B cell (primary cell): ENCODE measurements at regions of chr14 and their contacts with region 1.

Region 1: GRCh38 chr14:58297762-58298476 is 436 bp upstream of the ARID4A start:
- DNase-seq: peak; percentile 99
- ATAC-seq: peak; percentile 80
- H3K4me3 ChIP-seq: peak overlapping the region; percentile 85 to 98 (median 91)
- H3K4me3 Mint-ChIP-seq: no peak overlapping the region
- H3K27ac ChIP-seq: peak overlapping the region; percentile 96 to 98
- H3K27ac Mint-ChIP-seq: no peak overlapping the region
- H3K4me1 ChIP-seq: peaks cover 21 to 33% of the 10 kb centered on the region in 2 donors
- H3K4me1 Mint-ChIP-seq: peaks cover 43% of the 10 kb centered on the region
- H3K27me3 ChIP-seq: no peaks in the 10 kb centered on the region
- H3K27me3 Mint-ChIP-seq: no peaks in the 10 kb centered on the region
- CTCF ChIP-seq: no peak

Region 2: GRCh38 chr14:58199726-58200479 is 98.0 kb before region 1 on chr14 and contains the start of gene ACTR10:
- CTCF ChIA-PET with region 1: no interaction called
- POLR2A ChIA-PET with region 1: interaction called, 7 read pairs
- intact Hi-C with region 1: loop called (anchors 1 kb)
- DNase-seq: peak; percentile 95
- ATAC-seq: peak; percentile 89
- H3K4me3 ChIP-seq: peak within 1 kb of the TSS; percentile 71 to 88 (median 79)
- H3K4me3 Mint-ChIP-seq: peak within 1 kb of the TSS; percentile 95
- H3K27ac ChIP-seq: peak within 1 kb of the TSS; percentile 70 to 96
- H3K27ac Mint-ChIP-seq: peak within 1 kb of the TSS; percentile 96
- H3K4me1 ChIP-seq: peaks cover 15 to 17% of the 10 kb centered on the region in 2 donors
- H3K4me1 Mint-ChIP-seq: peaks cover 28% of the 10 kb centered on the region
- H3K27me3 ChIP-seq: peaks cover 0 to 3% (median 1%) of the 10 kb centered on the region in 4 experiments
- H3K27me3 Mint-ChIP-seq: no peaks in the 10 kb centered on the region
- CTCF ChIP-seq: no peak
- total RNA-seq, gene ACTR10: 34.1 and 40.6 TPM in 2 replicates

Region 3: GRCh38 chr14:58244556-58245387 is 53.1 kb before region 1 on chr14 and contains the start of gene PSMA3:
- CTCF ChIA-PET with region 1: interaction called, 5 read pairs
- POLR2A ChIA-PET with region 1: interaction called, 17 read pairs
- intact Hi-C with region 1: loop called (anchors 1 kb)
- DNase-seq: peak; percentile 97
- ATAC-seq: peak; percentile 87
- H3K4me3 ChIP-seq: peak within 1 kb of the TSS; percentile 89 to 100 (median 97)
- H3K4me3 Mint-ChIP-seq: peak within 1 kb of the TSS; percentile 96
- H3K27ac ChIP-seq: peak within 1 kb of the TSS; percentile 90 to 92
- H3K27ac Mint-ChIP-seq: peak within 1 kb of the TSS; percentile 96
- H3K4me1 ChIP-seq: peaks cover 9 to 19% of the 10 kb centered on the region in 2 donors
- H3K4me1 Mint-ChIP-seq: peaks cover 44% of the 10 kb centered on the region
- H3K27me3 ChIP-seq: no peaks in the 10 kb centered on the region
- H3K27me3 Mint-ChIP-seq: no peaks in the 10 kb centered on the region
- CTCF ChIP-seq: no peak
- total RNA-seq, gene PSMA3: 98.1 and 99.2 TPM in 2 replicates

Region 4: GRCh38 chr14:58280954-58281787 is 16.7 kb before region 1 on chr14:
- CTCF ChIA-PET with region 1: no interaction called
- POLR2A ChIA-PET with region 1: interaction called, 5 read pairs
- intact Hi-C with region 1: loop called (anchors 1 kb)
- DNase-seq: peak; percentile 76
- ATAC-seq: peak; percentile 84
- H3K4me3 ChIP-seq: peak overlapping the region in 2 of 5 experiments; percentile 2 to 9
- H3K4me3 Mint-ChIP-seq: peak overlapping the region; percentile 61
- H3K27ac ChIP-seq: peak overlapping the region; percentile 64 to 91
- H3K27ac Mint-ChIP-seq: peak overlapping the region; percentile 88
- H3K4me1 ChIP-seq: peaks cover 17 to 18% of the 10 kb centered on the region in 2 donors
- H3K4me1 Mint-ChIP-seq: peaks cover 43% of the 10 kb centered on the region
- H3K27me3 ChIP-seq: no peaks in the 10 kb centered on the region
- H3K27me3 Mint-ChIP-seq: no peaks in the 10 kb centered on the region
- CTCF ChIP-seq: no peak

Region 5: DNA sequence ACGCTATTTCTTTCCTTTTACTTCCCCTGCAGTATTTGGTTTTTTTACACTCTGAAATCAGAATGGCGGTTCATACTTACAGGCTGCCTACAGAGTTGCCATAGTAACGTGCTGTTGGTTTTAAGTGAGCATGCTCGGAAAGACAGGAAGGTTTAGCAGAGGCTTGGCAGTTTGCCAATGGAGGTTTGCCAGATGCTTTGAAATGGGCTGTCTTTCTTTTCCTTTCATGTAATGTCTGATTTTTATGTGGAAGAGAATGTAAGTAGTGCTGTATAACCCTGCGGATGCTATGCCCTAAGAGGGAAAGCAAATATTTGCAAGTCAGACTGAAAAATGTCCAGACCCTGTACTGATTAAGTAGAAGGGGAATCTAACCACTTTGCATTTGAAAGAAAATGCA is 33.2 kb after region 1 on chr14:
- CTCF ChIA-PET with region 1: no interaction called
- POLR2A ChIA-PET with region 1: no interaction called
- intact Hi-C with region 1: loop called (anchors 1 kb)
- DNase-seq: peak; percentile 93
- ATAC-seq: peak; percentile 94
- H3K4me3 ChIP-seq: peak overlapping the region in 1 of 5 experiments; percentile 4
- H3K4me3 Mint-ChIP-seq: peak overlapping the region; percentile 44
- H3K27ac ChIP-seq: peak overlapping the region; percentile 56 to 85
- H3K27ac Mint-ChIP-seq: peak overlapping the region; percentile 62
- H3K4me1 ChIP-seq: peaks cover 5 to 10% of the 10 kb centered on the region in 2 donors
- H3K4me1 Mint-ChIP-seq: peaks cover 8% of the 10 kb centered on the region
- H3K27me3 ChIP-seq: no peaks in the 10 kb centered on the region
- H3K27me3 Mint-ChIP-seq: no peaks in the 10 kb centered on the region
- CTCF ChIP-seq: no peak

Region 6: GRCh38 chr14:58395812-58396788 is 98.2 kb after region 1 on chr14 and contains the start of gene TOMM20L:
- CTCF ChIA-PET with region 1: interaction called, 5 read pairs
- POLR2A ChIA-PET with region 1: interaction called, 3 read pairs
- intact Hi-C with region 1: loop called (anchors 2 kb)
- DNase-seq: peak; percentile 89
- ATAC-seq: peak; percentile 90
- H3K4me3 ChIP-seq: peak within 1 kb of the TSS; percentile 36 to 77 (median 66)
- H3K4me3 Mint-ChIP-seq: peak within 1 kb of the TSS; percentile 87
- H3K27ac ChIP-seq: peak within 1 kb of the TSS; percentile 55 to 76
- H3K27ac Mint-ChIP-seq: peak within 1 kb of the TSS; percentile 87
- H3K4me1 ChIP-seq: peaks cover 9 to 14% of the 10 kb centered on the region in 2 donors
- H3K4me1 Mint-ChIP-seq: peaks cover 13% of the 10 kb centered on the region
- H3K27me3 ChIP-seq: no peaks in the 10 kb centered on the region
- H3K27me3 Mint-ChIP-seq: no peaks in the 10 kb centered on the region
- CTCF ChIP-seq: peak; percentile 93
- total RNA-seq, gene TOMM20L: 0.70 and 1.3 TPM in 2 replicates

Region 7: DNA sequence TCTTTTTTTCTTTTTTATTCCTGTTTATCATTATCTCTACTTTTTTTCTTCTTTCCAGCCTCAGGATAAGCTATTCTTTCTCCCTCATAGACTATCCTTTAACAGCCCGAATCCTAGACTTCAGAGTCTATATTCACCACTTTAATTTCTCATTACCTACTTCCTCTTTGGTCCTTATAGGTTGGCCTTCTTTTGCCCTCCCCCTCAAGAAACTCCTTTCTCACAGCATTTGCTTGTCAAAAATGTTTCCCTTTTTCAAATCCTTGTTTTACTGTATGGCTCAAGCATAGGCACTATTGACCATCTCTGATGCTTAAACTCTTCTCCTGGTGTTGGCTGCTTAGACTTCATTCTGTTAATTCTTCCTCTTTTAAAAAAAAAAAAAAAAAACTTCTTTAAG is 182.1 kb after region 1 on chr14:
- CTCF ChIA-PET with region 1: no interaction called
- POLR2A ChIA-PET with region 1: no interaction called
- intact Hi-C with region 1: no loop called
- DNase-seq: peak; percentile 16
- ATAC-seq: peak; percentile 43
- H3K4me3 ChIP-seq: no peak overlapping the region
- H3K4me3 Mint-ChIP-seq: no peak overlapping the region
- H3K27ac ChIP-seq: no peak overlapping the region
- H3K27ac Mint-ChIP-seq: no peak overlapping the region
- H3K4me1 ChIP-seq: peaks cover 0 to 3% of the 10 kb centered on the region in 2 donors
- H3K4me1 Mint-ChIP-seq: peaks cover 7% of the 10 kb centered on the region
- H3K27me3 ChIP-seq: no peaks in the 10 kb centered on the region
- H3K27me3 Mint-ChIP-seq: no peaks in the 10 kb centered on the region
- CTCF ChIP-seq: no peak